ENCODE measurements at regions of chr11 and their contacts with region 1.

Region 1: DNA sequence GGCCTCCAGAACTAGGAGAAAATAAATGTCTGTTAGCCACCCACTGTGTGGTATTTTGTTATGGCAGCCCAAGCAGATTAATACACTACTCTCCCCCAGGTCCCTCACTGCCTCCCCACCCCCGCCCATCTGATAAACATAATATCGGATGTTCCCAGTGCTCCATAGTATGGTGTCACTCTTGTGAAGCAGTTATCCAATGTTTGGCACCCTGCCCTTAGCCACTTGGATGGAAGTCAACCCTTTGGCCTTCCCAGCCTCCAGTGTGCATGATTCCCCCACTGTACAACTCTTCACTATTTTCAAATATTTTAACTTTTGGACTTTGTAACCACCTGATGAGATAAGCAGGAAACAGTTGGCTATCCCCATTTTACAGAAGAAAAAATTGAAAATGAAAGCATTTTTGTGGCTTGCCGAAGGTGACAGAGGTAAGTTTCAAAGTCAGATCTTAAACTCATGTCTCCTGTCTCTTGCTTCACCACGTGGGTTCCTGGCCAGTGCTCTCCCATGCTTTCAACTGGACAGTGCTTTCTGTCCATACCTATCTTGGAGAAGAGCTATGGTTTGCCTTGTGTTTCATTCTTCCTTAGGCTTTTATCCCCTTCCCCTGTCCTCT is 53.2 kb downstream of the ALX4 start:
- DNase-seq: no peak
- ATAC-seq: no peak
- H3K4me3 ChIP-seq: no peak overlapping the region
- H3K27ac ChIP-seq: no peak overlapping the region
- H3K4me1 ChIP-seq: no peaks in the 10 kb centered on the region
- CTCF ChIP-seq: no peak
- EP300 ChIP-seq: no peak
- POLR2A ChIP-seq: no peak
- RAD21 ChIP-seq: no peak

Region 2: DNA sequence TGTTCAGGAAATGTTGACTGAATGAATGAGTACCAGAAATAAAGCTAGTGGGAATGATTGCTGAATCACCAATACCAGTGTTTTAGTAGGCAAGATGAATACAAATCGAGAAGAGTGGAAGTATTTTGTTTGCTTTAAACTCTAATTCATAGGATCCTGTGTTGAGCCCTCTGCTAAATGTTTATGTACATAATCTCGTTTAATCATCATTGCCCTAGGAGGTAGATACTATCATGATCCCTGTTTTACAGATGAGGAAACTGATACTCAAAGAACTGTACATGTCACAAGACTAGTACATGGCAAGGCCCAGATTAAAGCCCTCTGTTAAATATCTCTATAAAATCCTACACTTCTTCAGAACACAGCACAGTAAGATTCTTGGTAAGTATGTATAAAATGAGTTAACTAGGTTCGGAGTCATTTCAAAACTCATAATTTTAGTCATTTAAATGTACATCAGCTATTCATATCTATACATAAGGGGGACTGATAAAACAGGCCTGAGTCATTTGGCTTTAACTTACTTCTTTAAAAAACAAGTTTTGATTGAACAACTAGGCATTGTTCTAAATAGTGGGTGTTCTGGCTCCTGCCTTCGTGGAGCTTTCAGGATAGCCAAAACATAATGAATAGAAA is 64.2 kb before region 1 on chr11:
- CTCF ChIA-PET with region 1: no interaction called
- POLR2A ChIA-PET with region 1: no interaction called
- DNase-seq: no peak
- ATAC-seq: no peak
- H3K4me3 ChIP-seq: no peak overlapping the region
- H3K27ac ChIP-seq: no peak overlapping the region
- H3K4me1 ChIP-seq: no peaks in the 10 kb centered on the region
- CTCF ChIP-seq: no peak
- EP300 ChIP-seq: no peak
- POLR2A ChIP-seq: no peak
- RAD21 ChIP-seq: no peak

Region 3: GRCh38 chr11:44269369-44270351 is 12.9 kb after region 1 on chr11:
- CTCF ChIA-PET with region 1: interaction called, 14 read pairs
- POLR2A ChIA-PET with region 1: no interaction called
- DNase-seq: no peak
- ATAC-seq: no peak
- H3K4me3 ChIP-seq: no peak overlapping the region
- H3K27ac ChIP-seq: no peak overlapping the region
- H3K4me1 ChIP-seq: no peaks in the 10 kb centered on the region
- CTCF ChIP-seq: no peak
- EP300 ChIP-seq: no peak
- POLR2A ChIP-seq: no peak
- RAD21 ChIP-seq: no peak

Measured in A549 (cell line).